HAP-1 (cell line): ENCODE measurements at regions of chr10 and their contacts with region 1.

Region 1: GRCh38 chr10:89029785-89030437 is 39.3 kb downstream of the FAS start:
- DNase-seq: peak; percentile 78 to 79
- H3K4me3 ChIP-seq: no peak overlapping the region
- H3K4me1 ChIP-seq: peaks cover 17% of the 10 kb centered on the region
- H3K27me3 ChIP-seq: no peaks in the 10 kb centered on the region

Region 2: GRCh38 chr10:88728107-88728763 is 301.7 kb before region 1 on chr10:
- in situ Hi-C with region 1: no loop called
- DNase-seq: peak in 1 of 2 experiments; percentile 85
- H3K4me3 ChIP-seq: no peak overlapping the region
- H3K4me1 ChIP-seq: peaks cover 9% of the 10 kb centered on the region
- H3K27me3 ChIP-seq: no peaks in the 10 kb centered on the region

Region 3: GRCh38 chr10:89207181-89207800 is 177.4 kb after region 1 on chr10 and contains the start of gene CH25H:
- in situ Hi-C with region 1: loop called (anchors 10 kb)
- DNase-seq: peak in 1 of 2 experiments; percentile 69
- H3K4me3 ChIP-seq: peak within 1 kb of the TSS; percentile 7
- H3K4me1 ChIP-seq: peaks cover 23% of the 10 kb centered on the region
- H3K27me3 ChIP-seq: no peaks in the 10 kb centered on the region